Activated T-helper 1 cell treated with anti-CD3 and anti-CD28 coated beads, Interleukin-12 subunit alpha, Interleukin-12 subunit beta, Interleukin-2, Interleukin-4 antibody, amounts not matched to agents 30 ng/mL and 10 ng/mL and 1 ng/mL, durations not matched to agents 14 hours and 24 hours and 36 hours (primary cell): ENCODE measurements at regions of chr11 and their contacts with region 1.

Region 1: GRCh38 chr11:11157185-11157584 is 195.9 kb downstream of the CSNK2A3 start:
- DNase-seq: peak; percentile 12
- H3K4me3 Mint-ChIP-seq: no peak overlapping the region
- H3K27ac Mint-ChIP-seq: no peak overlapping the region
- H3K4me1 Mint-ChIP-seq: peaks cover 23% of the 10 kb centered on the region
- H3K27me3 Mint-ChIP-seq: peaks cover 6% of the 10 kb centered on the region

Region 2: DNA sequence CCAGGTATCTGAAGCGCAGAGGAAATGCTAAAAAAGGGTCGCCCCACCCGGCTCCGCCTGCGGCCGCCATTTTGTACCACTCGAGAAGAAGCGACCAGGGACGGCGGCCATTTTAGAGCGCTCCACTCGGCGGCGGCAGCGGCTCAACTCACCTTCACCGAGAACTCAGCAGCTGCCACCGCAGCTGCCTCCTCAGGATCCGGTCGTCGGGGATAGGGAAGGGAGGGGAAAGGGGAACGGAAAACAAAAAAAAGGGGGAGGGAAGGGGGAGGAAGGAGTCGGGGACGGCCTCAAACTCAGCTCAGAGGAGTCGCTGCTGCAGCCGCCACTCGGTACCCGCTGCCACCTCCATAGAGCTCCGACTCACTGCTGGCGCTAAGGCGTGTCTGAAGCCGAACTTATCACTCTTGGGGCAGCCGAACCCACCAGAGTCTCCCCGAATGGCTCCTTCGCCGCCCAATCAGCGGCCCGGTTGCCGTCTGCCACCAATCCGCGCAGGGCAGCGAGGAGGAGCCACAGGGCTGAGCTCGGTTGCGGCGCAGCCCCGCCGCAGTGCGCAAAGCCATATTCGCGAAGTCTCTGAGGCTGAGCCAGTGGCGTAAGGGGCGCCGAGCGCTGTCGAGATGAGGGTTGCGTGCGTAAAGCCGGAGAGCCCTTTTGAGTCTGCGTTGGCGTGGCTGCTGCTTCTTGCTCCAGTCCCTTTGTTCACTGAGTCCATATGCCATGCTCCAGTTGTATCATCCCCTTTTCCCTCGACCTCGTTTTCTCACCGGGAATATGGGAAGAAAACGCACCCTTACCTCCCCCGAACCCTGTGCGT is 348.4 kb before region 1 on chr11 and contains the start of gene EIF4G2:
- intact Hi-C with region 1: loop called (anchors 10 kb)
- DNase-seq: peak; percentile 98
- H3K4me3 Mint-ChIP-seq: peak within 1 kb of the TSS; percentile 95
- H3K27ac Mint-ChIP-seq: peak within 1 kb of the TSS; percentile 98
- H3K4me1 Mint-ChIP-seq: peaks cover 43% of the 10 kb centered on the region
- H3K27me3 Mint-ChIP-seq: no peaks in the 10 kb centered on the region
- total RNA-seq, gene EIF4G2: 1,084 and 1,108 TPM in 2 replicates

Region 3: GRCh38 chr11:11028017-11028692 is 129.0 kb before region 1 on chr11:
- intact Hi-C with region 1: loop called (anchors 1 kb)
- DNase-seq: peak; percentile 57
- H3K4me3 Mint-ChIP-seq: no peak overlapping the region
- H3K27ac Mint-ChIP-seq: no peak overlapping the region
- H3K4me1 Mint-ChIP-seq: no peaks in the 10 kb centered on the region
- H3K27me3 Mint-ChIP-seq: peaks cover 16% of the 10 kb centered on the region

Region 4: DNA sequence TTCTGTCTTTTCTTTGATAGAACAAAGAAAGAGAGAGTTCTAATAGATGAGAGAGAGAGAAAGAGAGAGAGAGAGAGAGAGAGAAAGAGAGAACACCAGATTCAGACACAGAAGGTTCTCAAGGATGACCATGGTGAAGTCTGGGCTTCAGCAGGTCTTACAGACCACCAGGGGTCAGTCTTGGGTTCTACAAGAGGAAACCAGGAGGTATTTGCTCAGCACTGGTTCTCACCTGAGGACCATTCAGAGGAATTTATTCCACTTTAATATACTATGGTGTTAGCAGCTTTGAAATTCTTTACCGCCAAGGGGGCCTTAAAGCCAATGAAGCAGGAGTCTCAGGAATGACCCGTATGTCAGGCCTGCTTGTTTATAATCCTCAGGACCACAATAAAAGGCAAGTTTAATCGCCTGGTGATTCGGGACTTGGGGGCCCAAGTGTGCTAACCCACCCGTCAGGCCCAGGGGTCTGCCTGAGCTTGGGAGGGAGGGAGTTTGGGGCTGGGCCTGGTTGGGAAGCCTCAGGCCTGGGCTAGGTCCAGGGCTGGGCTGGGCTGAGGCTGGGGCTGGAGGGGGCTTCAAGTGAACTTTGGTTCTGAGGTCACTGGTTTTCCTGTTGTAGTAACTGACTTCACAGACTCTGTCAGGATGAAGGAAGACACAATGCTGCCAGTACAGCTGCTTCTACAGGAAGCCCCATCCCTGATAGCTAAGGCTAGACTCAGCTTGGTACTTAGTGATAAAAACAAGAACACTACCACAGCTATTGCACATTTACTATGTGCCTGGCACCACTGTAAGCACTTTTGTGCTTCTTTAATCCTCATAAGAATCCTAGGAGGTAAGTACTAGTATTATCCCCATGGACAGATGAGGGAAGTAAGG is 120.1 kb before region 1 on chr11:
- intact Hi-C with region 1: loop called (anchors 1 kb)
- DNase-seq: peak; percentile 8
- H3K4me3 Mint-ChIP-seq: no peak overlapping the region
- H3K27ac Mint-ChIP-seq: no peak overlapping the region
- H3K4me1 Mint-ChIP-seq: no peaks in the 10 kb centered on the region
- H3K27me3 Mint-ChIP-seq: peaks cover 2% of the 10 kb centered on the region